MCF 10A (cell line): ENCODE measurements at regions of chr10 and their contacts with region 1.

Region 1: DNA sequence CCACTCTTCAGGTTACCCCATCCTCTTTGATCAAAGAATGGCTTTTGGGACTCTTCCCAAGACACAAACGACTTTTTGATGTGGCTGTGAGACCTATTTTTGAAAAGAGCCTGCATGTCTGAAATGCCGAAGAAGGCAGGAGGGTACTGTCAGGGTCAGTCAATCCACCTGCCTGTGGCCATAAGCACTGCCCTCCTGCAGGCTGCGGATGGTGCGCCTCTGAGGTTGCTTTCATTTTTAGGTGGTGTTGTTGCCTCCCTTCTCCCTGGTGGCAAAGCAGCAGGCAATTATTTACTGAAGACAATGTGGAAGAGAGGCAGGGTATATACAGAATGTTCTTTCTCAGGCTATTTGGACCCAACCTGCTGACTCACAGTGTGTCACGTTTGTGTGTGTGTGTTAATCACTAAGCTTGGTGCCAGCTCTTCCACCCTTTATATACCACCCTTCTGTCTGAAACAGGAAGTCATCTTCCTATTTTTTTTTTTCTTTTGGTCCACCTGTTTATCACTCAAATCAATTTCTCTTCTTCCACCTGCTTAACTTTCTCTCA is 1421.2 kb upstream of the CELF2 start:
- DNase-seq: peak; percentile 91
- H3K4me3 Mint-ChIP-seq: peak overlapping the region; percentile 68
- H3K27ac Mint-ChIP-seq: peak overlapping the region; percentile 83
- H3K4me1 Mint-ChIP-seq: peaks cover 37% of the 10 kb centered on the region
- H3K27me3 Mint-ChIP-seq: no peaks in the 10 kb centered on the region
- CTCF ChIP-seq: no peak

Region 2: GRCh38 chr10:9427209-9427608 is 169.2 kb before region 1 on chr10:
- CTCF ChIA-PET with region 1: interaction called, 3 read pairs
- POLR2A ChIA-PET with region 1: no interaction called
- intact Hi-C with region 1: loop called (anchors 5 kb)
- DNase-seq: no peak
- H3K4me3 Mint-ChIP-seq: no peak overlapping the region
- H3K27ac Mint-ChIP-seq: no peak overlapping the region
- H3K4me1 Mint-ChIP-seq: no peaks in the 10 kb centered on the region
- H3K27me3 Mint-ChIP-seq: no peaks in the 10 kb centered on the region
- CTCF ChIP-seq: no peak